ENCODE measurements at regions of chr3 and their contacts with region 1.

Region 1: DNA sequence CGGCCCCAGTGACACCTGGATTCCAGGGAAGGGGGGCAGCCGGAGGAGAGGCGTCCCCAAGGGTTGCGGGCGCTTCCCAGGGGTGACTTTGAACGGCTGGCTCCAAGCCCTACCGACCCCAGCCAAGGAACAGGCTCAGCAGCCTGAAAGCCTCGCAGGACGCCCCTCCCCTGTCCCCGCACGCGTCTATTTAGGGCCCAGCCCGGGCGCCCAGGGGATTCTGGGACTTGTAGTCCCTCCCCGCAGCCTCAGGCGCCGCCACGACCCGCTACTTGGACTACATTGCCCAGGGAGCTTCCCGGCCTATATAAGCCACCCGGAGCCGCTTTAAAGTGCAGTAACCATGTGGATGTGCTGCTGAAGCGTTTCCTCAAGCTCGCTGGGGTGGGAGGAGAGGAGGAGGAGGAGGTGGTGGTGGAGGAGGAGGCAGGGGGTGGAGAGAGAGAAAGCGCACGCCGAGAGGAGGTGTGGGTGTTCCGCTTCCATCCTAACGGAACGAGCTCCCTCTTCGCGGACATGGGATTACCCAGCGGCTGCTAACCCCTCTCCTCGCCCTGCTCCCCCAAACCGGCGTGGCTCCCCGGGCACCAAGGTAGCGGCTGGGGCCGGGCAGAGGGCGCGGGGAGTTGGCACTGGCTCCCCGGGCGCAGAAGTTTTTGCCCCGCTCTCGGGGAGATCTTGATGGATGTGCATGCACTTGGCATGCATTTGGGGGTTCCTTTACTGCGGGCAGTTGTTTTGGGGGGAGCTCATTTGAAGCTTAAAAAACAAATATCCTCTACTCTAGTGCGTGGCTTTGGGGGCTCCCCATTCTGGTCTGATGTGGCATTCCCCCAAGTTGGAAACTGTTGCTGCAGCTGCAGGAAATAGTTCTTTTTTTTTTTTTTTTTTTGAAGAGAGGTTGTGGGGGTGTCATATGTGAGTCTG is at the start of gene ITPR1:
- DNase-seq: peak; percentile 99
- ATAC-seq: peak; percentile 95
- H3K4me3 Mint-ChIP-seq: peak within 1 kb of the TSS; percentile 77
- H3K27ac Mint-ChIP-seq: peak within 1 kb of the TSS; percentile 71
- H3K4me1 Mint-ChIP-seq: peaks cover 32% of the 10 kb centered on the region
- H3K27me3 Mint-ChIP-seq: peaks cover 8% of the 10 kb centered on the region
- total RNA-seq, gene ITPR1: 48.6 to 55.6 TPM

Region 2: DNA sequence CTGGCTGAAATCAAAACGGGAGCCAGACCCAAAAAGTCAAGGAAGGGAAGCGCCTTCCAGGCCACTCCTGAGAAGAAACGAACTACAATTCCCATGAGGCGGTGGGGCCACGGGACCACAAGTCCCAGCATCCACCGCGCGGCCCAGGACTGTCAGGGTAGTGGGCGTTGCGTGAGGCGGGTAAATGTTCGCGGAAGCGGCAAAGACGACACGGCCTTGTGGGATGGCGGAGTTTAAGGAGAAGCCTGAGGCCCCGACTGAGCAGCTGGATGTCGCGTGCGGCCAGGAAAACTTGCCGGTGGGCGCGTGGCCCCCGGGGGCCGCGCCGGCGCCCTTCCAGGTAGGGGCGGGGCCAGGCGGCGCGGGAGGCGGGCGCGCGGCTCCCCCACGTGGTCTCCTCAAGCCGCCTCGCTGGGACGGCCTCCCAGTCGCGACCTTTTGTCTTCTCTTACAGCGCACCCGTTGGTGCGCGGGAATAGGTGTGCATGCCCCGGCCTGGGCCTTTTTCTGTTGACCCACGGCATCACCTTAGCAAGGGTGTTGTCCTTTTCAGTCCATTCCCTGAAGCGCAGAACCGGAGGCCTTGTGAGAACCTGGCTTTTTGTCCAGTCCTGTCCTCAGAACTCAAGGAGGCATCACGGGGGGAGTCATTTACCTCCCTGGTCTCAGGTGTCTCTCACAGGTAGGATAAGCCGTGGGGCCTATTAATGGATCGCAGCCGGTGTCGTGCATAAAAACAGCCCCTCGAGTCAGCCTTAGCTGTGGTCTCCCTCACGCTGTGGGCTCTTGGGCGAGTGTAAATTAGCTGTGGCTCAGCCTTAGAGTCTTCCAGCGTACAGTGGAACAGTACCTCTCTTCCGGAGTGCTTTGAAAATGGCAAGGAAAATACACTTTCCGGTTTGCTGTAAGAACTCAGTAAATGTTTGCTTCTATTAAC is 189.8 kb before region 1 on chr3 and contains the start of gene SETMAR:
- CTCF ChIA-PET with region 1: interaction called, 3 read pairs
- POLR2A ChIA-PET with region 1: no interaction called
- intact Hi-C with region 1: loop called (anchors 1 kb)
- DNase-seq: peak; percentile 93
- ATAC-seq: peak; percentile 96
- H3K4me3 Mint-ChIP-seq: peak within 1 kb of the TSS; percentile 79
- H3K27ac Mint-ChIP-seq: peak within 1 kb of the TSS; percentile 96
- H3K4me1 Mint-ChIP-seq: peaks cover 26% of the 10 kb centered on the region
- H3K27me3 Mint-ChIP-seq: no peaks in the 10 kb centered on the region
- total RNA-seq, gene SETMAR: 19.3 to 19.4 TPM

Region 3: DNA sequence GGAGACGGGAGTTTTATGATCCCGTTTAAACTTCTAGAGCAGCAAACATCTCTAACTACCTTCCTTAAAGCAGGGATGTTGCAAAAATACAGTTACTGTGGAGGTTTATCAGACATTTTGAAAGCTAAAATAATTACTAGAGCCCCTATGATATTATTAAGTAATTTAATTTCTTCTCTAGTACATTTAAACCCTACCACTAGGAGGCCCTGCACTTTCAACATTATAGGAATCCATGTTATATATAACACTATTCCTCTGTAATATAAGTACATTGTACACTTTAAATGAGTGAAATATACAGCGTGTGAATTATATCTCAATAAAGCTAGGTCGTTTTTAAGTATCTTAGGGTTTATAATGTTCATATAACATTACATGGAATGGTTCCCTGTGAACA is 178.6 kb before region 1 on chr3:
- CTCF ChIA-PET with region 1: no interaction called
- POLR2A ChIA-PET with region 1: no interaction called
- intact Hi-C with region 1: no loop called
- DNase-seq: no peak
- ATAC-seq: no peak
- H3K4me3 Mint-ChIP-seq: no peak overlapping the region
- H3K27ac Mint-ChIP-seq: no peak overlapping the region
- H3K4me1 Mint-ChIP-seq: peaks cover 3% of the 10 kb centered on the region
- H3K27me3 Mint-ChIP-seq: no peaks in the 10 kb centered on the region

Region 4: GRCh38 chr3:4466741-4467521 is 26.3 kb before region 1 on chr3 and contains the start of gene SUMF1:
- CTCF ChIA-PET with region 1: interaction called, 4 read pairs
- POLR2A ChIA-PET with region 1: interaction called, 15 read pairs
- intact Hi-C with region 1: loop called (anchors 1 kb)
- DNase-seq: peak; percentile 88
- ATAC-seq: peak; percentile 98
- H3K4me3 Mint-ChIP-seq: peak within 1 kb of the TSS; percentile 87
- H3K27ac Mint-ChIP-seq: peak within 1 kb of the TSS; percentile 93
- H3K4me1 Mint-ChIP-seq: peaks cover 18% of the 10 kb centered on the region
- H3K27me3 Mint-ChIP-seq: no peaks in the 10 kb centered on the region
- total RNA-seq, gene SUMF1: 3.5 to 4.9 TPM

Region 5: DNA sequence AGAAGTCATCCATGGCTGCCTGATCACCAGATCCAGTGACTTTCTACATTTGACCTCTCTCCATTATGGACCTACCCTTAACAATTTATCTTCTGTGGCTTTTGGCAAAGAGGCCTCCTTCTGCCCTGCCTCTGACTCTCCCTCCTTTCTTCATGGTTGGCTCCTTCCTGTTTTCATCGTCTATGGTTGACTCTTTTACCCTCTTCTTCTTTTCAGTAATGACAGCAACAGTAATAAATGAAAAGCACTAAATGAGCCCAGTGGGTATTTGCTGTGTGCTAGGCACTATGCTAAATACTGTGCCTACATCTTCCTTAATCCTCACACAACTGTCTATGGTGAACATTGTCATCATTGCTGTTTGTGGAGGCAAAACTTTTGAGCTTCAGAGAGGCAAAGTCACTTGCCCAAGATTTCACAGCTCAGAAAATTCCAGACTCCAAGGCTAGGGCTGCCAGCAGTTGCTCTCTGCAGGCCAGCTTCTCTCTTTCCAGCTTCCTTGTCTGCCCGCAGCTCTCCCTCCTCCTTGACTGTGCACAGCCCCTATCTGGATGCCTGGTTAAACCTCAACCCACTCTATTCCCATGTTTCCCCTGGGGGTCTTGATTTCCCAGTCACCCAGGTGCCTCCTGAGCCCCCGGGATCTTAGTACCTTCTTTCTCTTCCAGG is 24.5 kb after region 1 on chr3:
- CTCF ChIA-PET with region 1: interaction called, 27 read pairs
- POLR2A ChIA-PET with region 1: interaction called, 24 read pairs
- intact Hi-C with region 1: loop called (anchors 2 kb)
- DNase-seq: no peak
- ATAC-seq: peak; percentile 28
- H3K4me3 Mint-ChIP-seq: no peak overlapping the region
- H3K27ac Mint-ChIP-seq: peak overlapping the region; percentile 82
- H3K4me1 Mint-ChIP-seq: peaks cover 35% of the 10 kb centered on the region
- H3K27me3 Mint-ChIP-seq: no peaks in the 10 kb centered on the region

Region 6: GRCh38 chr3:4826237-4827100 is 333.2 kb after region 1 on chr3:
- CTCF ChIA-PET with region 1: no interaction called
- POLR2A ChIA-PET with region 1: no interaction called
- intact Hi-C with region 1: loop called in 1 of 2 experiments (anchors 5 kb)
- DNase-seq: no peak
- ATAC-seq: no peak
- H3K4me3 Mint-ChIP-seq: peak overlapping the region; percentile 62
- H3K27ac Mint-ChIP-seq: peak overlapping the region; percentile 87
- H3K4me1 Mint-ChIP-seq: peaks cover 95% of the 10 kb centered on the region
- H3K27me3 Mint-ChIP-seq: no peaks in the 10 kb centered on the region

Region 7: GRCh38 chr3:5187156-5187919 is 694.1 kb after region 1 on chr3 and contains the start of gene EDEM1:
- CTCF ChIA-PET with region 1: no interaction called
- POLR2A ChIA-PET with region 1: no interaction called
- intact Hi-C with region 1: loop called (anchors 5 to 10 kb)
- DNase-seq: peak; percentile 97
- ATAC-seq: peak; percentile 84
- H3K4me3 Mint-ChIP-seq: peak within 1 kb of the TSS; percentile 99
- H3K27ac Mint-ChIP-seq: peak within 1 kb of the TSS; percentile 99
- H3K4me1 Mint-ChIP-seq: peaks cover 23% of the 10 kb centered on the region
- H3K27me3 Mint-ChIP-seq: no peaks in the 10 kb centered on the region
- total RNA-seq, gene EDEM1: 105 to 175 TPM

Measured in activated CD4-positive, alpha-beta T cell treated with anti-CD3 and anti-CD28 coated beads for 36 hours (primary cell).